HCT116 (cell line): ENCODE measurements at regions of chr9 and their contacts with region 1.

Region 1: DNA sequence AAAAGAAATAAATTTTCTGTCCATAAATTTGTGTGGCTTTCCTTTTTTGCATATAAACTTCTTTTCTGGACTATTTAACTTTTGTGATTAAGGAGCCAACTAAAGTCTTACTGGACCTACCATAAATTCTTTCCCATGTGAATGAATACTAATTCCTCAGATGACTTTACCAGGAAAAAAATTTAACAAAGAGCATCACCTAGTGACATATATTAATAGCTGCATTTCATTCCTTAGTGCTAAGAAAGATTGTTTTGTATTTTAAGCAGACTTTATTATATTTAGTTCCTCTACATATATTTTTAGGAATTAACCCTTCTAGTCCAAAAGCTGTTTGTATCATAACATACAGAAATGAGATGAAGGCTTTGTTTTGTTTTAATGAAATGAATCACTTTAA is 64.4 kb downstream of the C9orf85 start:
- DNase-seq: no peak
- ATAC-seq: no peak
- H3K4me3 ChIP-seq: no peak overlapping the region
- H3K27ac ChIP-seq: no peak overlapping the region
- H3K4me1 ChIP-seq: no peaks in the 10 kb centered on the region
- H3K27me3 ChIP-seq: no peaks in the 10 kb centered on the region
- CTCF ChIP-seq: peak in 2 of 3 experiments; percentile 25 to 31; a peak in 1 of 6 replicates
- POLR2A ChIP-seq: no peak
- RAD21 ChIP-seq: peak; percentile 49; the same call in 1 of the 2 replicates

Region 2: GRCh38 chr9:71795097-71795813 is 180.6 kb before region 1 on chr9:
- CTCF ChIA-PET with region 1: no interaction called
- POLR2A ChIA-PET with region 1: no interaction called
- RAD21 ChIA-PET with region 1: no interaction called
- intact Hi-C with region 1: loop called (anchors 5 kb)
- DNase-seq: no peak
- ATAC-seq: no peak
- H3K4me3 ChIP-seq: no peak overlapping the region
- H3K27ac ChIP-seq: no peak overlapping the region
- H3K4me1 ChIP-seq: no peaks in the 10 kb centered on the region
- H3K27me3 ChIP-seq: no peaks in the 10 kb centered on the region
- CTCF ChIP-seq: no peak
- POLR2A ChIP-seq: no peak
- RAD21 ChIP-seq: no peak